Testis (tissue), 5 donors: ENCODE measurements at regions of chr9 and their contacts with region 1.

Region 1: DNA sequence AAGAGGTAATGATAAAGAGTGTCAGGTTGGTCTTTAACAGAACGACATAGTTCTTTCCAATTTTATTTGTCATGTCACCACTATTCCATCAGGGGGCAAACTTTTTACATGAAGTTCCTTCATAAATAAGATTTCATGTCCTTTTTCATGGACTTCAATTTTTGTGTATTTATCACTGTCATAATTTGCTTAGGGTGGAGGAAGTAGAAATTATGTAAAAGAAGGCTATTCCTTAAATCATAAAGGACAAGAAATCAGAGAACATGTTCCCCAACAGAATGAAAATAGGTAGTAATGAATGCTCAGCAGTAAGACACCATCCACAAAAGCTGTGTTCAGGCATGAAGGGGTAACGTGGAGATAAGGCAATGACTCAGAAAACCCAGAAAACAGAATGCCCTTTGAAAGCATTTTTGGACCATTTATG is 72.7 kb downstream of the ZFAND5 start:
- DNase-seq: no peak
- H3K4me3 ChIP-seq: no peak overlapping the region
- H3K27ac ChIP-seq: no peak overlapping the region
- H3K4me1 ChIP-seq: peaks cover 5% of the 10 kb centered on the region
- H3K27me3 ChIP-seq: no peaks in the 10 kb centered on the region
- CTCF ChIP-seq: peak; percentile 40 to 56 (median 42)
- POLR2A ChIP-seq: no peak

Region 2: GRCh38 chr9:72089451-72090130 is 202.7 kb before region 1 on chr9:
- intact Hi-C with region 1: no loop called
- DNase-seq: no peak
- H3K4me3 ChIP-seq: no peak overlapping the region
- H3K27ac ChIP-seq: no peak overlapping the region
- H3K4me1 ChIP-seq: no peaks in the 10 kb centered on the region
- H3K27me3 ChIP-seq: no peaks in the 10 kb centered on the region
- CTCF ChIP-seq: no peak
- POLR2A ChIP-seq: no peak

Region 3: DNA sequence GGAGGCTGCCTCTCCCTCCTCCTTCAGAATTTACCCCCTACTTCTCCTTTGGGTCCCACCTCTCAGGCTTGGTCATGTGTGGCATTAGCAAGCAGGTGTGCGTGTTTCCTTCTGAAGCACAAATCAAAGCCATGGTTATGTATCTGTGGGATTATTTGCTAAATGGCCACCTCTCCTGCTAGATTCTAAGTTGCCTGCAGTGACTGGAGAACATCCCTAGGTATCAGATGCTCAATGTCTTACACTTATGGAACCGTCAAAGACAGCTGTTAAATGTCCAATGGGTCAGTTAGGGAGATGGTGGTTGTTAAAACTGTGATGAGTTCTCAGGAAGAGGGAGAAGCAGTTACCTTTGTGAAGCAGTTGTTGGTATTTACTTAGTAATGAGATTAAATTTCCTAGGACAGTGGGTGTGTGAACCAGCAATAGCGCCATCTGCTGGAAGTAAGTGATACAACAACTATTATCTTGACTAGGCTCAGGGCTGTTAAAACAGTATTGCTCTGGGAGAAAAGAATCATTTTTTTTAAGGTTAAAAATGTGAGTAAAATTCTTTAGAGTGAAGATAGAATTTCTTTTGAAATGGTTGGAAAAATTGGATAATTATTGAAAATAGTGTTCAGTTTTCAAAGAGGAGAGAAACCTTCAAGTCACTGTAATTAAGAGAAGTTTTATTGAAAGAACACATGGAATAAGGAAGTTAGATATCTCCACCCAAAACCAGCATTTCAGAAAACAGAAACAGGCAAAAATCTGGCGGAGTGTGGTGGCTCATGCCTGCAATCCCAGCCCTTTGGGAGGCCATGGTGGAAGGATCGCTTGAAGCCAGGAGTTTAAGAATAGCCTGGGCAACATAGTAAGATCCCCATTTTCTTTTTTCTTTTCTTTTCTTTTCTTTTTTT is 300.5 kb after region 1 on chr9:
- intact Hi-C with region 1: loop called (anchors 10 kb)
- DNase-seq: no peak
- H3K4me3 ChIP-seq: no peak overlapping the region
- H3K27ac ChIP-seq: peak overlapping the region; percentile 22 to 38
- H3K4me1 ChIP-seq: peaks cover 6% of the 10 kb centered on the region
- H3K27me3 ChIP-seq: no peaks in the 10 kb centered on the region
- CTCF ChIP-seq: peak; percentile 94 to 97 (median 95)
- POLR2A ChIP-seq: no peak